ENCODE measurements at regions of chr5 and their contacts with region 1.

Region 1: DNA sequence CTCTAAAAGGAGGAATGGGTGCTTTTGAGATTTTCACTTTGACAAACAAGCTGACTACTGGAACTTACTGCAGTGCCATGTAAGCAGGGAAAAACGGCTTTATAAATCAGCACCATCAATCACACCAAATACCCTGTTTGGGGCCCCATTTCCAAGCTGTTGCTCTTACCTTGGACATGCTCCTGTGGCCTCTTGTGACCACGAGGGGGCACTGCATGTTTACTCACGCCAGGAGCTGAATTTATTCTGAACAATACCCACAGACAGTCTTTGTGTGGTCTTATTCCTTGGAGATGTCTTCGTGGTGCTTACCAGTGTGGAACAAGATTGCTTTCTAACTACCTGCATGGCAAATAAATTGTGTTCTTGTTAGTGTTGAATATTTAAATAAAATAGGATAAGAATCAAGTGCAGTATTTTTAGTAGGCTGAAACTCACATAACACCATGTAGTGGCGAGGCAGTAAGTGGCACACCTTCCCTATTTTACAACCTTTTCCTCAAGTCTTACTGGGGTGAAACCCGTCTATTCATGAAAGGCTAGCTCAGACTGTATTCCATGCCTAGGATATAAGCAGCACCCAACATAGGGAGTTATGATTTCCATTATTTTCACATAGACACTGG is 155.5 kb upstream of the NMUR2 start:
- DNase-seq: peak; percentile 82
- H3K4me3 Mint-ChIP-seq: no peak overlapping the region
- H3K27ac Mint-ChIP-seq: no peak overlapping the region
- H3K4me1 Mint-ChIP-seq: no peaks in the 10 kb centered on the region
- H3K27me3 Mint-ChIP-seq: no peaks in the 10 kb centered on the region
- CTCF ChIP-seq: peak; percentile 96

Region 2: DNA sequence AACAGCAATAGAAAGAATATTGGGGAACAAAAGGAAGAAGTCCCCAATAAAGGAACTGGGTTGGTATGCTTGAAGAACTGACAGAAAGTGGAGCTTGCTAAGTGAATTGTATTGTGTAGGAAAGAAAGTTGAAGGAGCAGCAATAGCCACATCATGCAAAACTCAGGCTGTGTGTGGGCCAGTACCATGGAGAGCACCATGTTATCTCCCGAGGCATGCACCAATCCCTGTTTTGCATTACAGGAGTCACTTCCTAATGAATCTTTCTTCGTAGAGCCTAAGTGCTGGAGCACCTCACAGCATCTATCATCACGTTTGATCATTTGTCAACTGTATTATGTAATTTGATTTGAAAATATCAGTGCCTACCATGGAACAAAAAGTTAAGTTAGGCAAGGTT is 17.9 kb before region 1 on chr5:
- CTCF ChIA-PET with region 1: interaction called, 11 read pairs
- POLR2A ChIA-PET with region 1: no interaction called
- intact Hi-C with region 1: no loop called
- DNase-seq: peak; percentile 73
- H3K4me3 Mint-ChIP-seq: no peak overlapping the region
- H3K27ac Mint-ChIP-seq: no peak overlapping the region
- H3K4me1 Mint-ChIP-seq: peaks cover 12% of the 10 kb centered on the region
- H3K27me3 Mint-ChIP-seq: no peaks in the 10 kb centered on the region
- CTCF ChIP-seq: no peak

Region 3: DNA sequence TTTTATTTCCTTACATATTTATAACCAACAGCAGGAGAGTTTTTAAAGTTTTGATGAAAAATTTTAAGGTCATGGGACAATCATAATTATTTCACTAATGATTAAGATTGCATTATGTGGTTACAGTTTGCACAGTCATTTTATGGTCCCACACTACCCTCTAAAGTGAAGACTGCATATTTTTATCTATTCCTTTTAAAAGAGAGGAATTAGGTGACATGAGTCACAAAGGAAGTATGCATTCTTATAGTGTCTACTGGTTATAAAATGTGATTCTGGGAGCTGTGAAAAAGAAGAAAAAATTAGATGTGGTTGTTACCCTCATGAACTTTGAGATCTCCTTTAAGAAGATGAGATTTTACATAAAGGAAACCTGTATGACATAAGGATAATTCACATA is 841.9 kb after region 1 on chr5:
- CTCF ChIA-PET with region 1: no interaction called
- POLR2A ChIA-PET with region 1: no interaction called
- intact Hi-C with region 1: loop called (anchors 1 kb)
- DNase-seq: peak; percentile 15
- H3K4me3 Mint-ChIP-seq: no peak overlapping the region
- H3K27ac Mint-ChIP-seq: no peak overlapping the region
- H3K4me1 Mint-ChIP-seq: peaks cover 14% of the 10 kb centered on the region
- H3K27me3 Mint-ChIP-seq: no peaks in the 10 kb centered on the region
- CTCF ChIP-seq: no peak

Region 4: DNA sequence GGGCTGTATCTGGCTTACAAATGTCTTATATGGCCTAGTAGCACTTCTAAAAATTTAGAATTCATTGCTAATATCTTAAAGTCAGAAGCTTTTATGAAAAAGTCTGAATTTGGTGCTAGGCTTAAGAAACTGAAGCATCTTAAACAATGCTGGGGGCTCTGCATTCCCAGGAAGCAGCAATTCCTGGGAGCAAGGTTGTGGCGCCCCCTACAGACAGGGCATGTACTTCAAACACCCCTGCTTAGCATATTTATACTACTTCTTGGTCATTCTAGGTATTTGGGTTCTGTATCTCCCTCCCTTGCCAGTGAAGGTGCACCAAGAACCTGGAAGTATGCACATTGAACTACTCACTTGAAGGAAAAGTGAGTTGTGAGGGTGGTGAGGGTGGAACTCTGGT is 865.3 kb after region 1 on chr5:
- CTCF ChIA-PET with region 1: no interaction called
- POLR2A ChIA-PET with region 1: no interaction called
- intact Hi-C with region 1: loop called (anchors 2 kb)
- DNase-seq: peak; percentile 52
- H3K4me3 Mint-ChIP-seq: no peak overlapping the region
- H3K27ac Mint-ChIP-seq: no peak overlapping the region
- H3K4me1 Mint-ChIP-seq: no peaks in the 10 kb centered on the region
- H3K27me3 Mint-ChIP-seq: no peaks in the 10 kb centered on the region
- CTCF ChIP-seq: peak; percentile 37

Region 5: GRCh38 chr5:153480401-153480800 is 919.8 kb after region 1 on chr5:
- CTCF ChIA-PET with region 1: interaction called, 8 read pairs
- POLR2A ChIA-PET with region 1: no interaction called
- intact Hi-C with region 1: loop called (anchors 5 kb)
- DNase-seq: peak; percentile 65
- H3K4me3 Mint-ChIP-seq: no peak overlapping the region
- H3K27ac Mint-ChIP-seq: no peak overlapping the region
- H3K4me1 Mint-ChIP-seq: peaks cover 25% of the 10 kb centered on the region
- H3K27me3 Mint-ChIP-seq: no peaks in the 10 kb centered on the region
- CTCF ChIP-seq: no peak

Region 6: GRCh38 chr5:153756540-153756939 is 1195.9 kb after region 1 on chr5:
- CTCF ChIA-PET with region 1: interaction called, 3 read pairs
- POLR2A ChIA-PET with region 1: no interaction called
- intact Hi-C with region 1: loop called (anchors 1 kb)
- DNase-seq: peak; percentile 32
- H3K4me3 Mint-ChIP-seq: no peak overlapping the region
- H3K27ac Mint-ChIP-seq: no peak overlapping the region
- H3K4me1 Mint-ChIP-seq: peaks cover 15% of the 10 kb centered on the region
- H3K27me3 Mint-ChIP-seq: no peaks in the 10 kb centered on the region
- CTCF ChIP-seq: peak; percentile 31